ENCODE measurements at regions of chr13 and their contacts with region 1.

Region 1: GRCh38 chr13:34357435-34358232 is 539.7 kb downstream of the RFC3 start:
- DNase-seq: peak; percentile 88
- ATAC-seq: peak; percentile 86
- H3K4me3 ChIP-seq: no peak overlapping the region
- H3K27ac ChIP-seq: peak overlapping the region; percentile 96
- H3K4me1 ChIP-seq: peaks cover 59% of the 10 kb centered on the region
- H3K27me3 ChIP-seq: no peaks in the 10 kb centered on the region
- CTCF ChIP-seq: no peak

Region 2: DNA sequence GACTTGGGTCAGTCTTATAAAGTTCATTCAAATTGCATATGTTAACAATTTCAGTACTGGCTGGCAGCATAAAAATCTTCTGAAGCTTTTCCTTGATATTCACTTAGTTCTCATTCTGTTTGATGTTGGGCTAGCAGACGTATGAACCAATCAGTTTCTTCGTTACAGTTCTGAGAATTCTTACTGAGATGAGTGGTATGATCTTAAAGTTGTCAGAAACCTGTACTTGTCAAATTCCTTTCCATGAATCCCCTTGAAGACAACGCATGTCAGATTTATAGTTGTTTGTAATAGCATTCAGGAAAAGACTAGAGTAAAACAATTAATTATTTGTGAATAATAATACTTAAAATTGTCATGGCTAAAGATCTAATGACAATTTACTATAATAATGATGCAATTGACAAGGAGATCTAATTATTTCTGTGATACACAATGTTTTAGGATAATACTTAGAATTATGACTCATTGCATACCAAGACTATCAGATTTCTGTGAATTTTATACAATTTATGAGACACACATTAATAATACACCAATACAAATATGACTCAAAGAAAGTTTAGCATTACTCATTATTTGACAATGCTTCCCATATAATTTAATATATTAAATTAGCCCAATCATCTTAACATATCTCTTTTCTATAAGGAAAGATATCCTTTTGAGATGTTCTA is 92.5 kb before region 1 on chr13:
- CTCF ChIA-PET with region 1: no interaction called
- POLR2A ChIA-PET with region 1: no interaction called
- intact Hi-C with region 1: loop called (anchors 5 kb)
- DNase-seq: peak; percentile 78
- ATAC-seq: peak; percentile 87
- H3K4me3 ChIP-seq: no peak overlapping the region; the same call in 1 of the 2 replicates
- H3K27ac ChIP-seq: peak overlapping the region; percentile 93
- H3K4me1 ChIP-seq: peaks cover 19% of the 10 kb centered on the region
- H3K27me3 ChIP-seq: no peaks in the 10 kb centered on the region
- CTCF ChIP-seq: no peak

Region 3: GRCh38 chr13:34506796-34507195 is 149.2 kb after region 1 on chr13:
- CTCF ChIA-PET with region 1: no interaction called
- POLR2A ChIA-PET with region 1: no interaction called
- intact Hi-C with region 1: no loop called
- DNase-seq: peak; percentile 7
- ATAC-seq: 0 out of 2 replicates have a peak, but pooled peaks have one; percentile 24
- H3K4me3 ChIP-seq: no peak overlapping the region
- H3K27ac ChIP-seq: no peak overlapping the region
- H3K4me1 ChIP-seq: peaks cover 4% of the 10 kb centered on the region; the same call in 1 of the 2 replicates
- H3K27me3 ChIP-seq: no peaks in the 10 kb centered on the region
- CTCF ChIP-seq: no peak